Activated CD8-positive, alpha-beta memory T cell treated with anti-CD3 and anti-CD28 coated beads, Interleukin-2, amount 10 ng/mL, durations not matched to agents 7 days and 5 days (primary cell): ENCODE measurements at regions of chr11 and their contacts with region 1.

Region 1: DNA sequence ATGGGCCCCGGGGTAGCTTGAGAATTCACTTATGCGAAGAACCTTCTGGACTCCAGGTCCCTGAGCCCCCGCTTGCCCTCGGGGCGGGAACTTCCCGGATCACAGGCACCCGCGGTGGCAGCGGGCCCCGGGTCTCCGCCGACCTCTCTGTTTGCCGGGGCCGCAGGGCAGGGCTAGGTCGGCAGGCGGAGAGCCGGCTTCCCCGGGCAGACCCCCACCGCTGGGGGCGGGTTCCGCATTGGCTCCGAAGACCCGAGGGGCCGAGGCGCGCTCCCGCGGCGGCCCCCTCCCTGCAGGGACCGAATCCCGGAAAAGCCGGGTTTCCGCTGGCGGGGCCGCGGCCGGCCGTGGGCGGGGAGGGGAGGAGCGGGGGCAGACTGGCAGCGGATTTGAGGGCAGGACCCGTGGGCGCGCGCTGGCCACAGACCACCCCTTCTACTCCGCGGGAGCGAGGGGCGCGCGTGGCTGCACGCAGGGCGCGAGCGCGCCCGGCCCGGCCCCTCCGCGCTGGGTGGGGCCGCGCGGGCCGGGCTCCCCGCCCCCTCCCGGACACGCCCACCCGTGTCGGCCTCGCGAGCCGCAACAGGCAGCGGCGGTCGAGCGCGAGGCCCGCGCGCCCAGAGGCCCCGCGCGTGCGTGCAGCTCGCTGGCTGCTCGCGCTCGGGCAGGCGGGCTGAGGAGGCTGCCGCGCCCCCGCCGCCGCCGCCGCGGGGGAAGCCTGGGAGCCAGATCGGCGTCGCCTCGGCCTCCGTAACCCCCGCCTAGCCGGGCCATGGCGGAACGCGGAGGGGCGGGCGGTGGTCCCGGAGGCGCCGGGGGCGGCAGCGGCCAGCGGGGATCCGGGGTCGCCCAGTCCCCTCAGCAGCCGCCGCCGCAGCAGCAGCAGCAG is at the start of gene PACS1:
- DNase-seq: peak; percentile 87
- ATAC-seq: peak; percentile 77
- H3K4me3 Mint-ChIP-seq: peak within 1 kb of the TSS; percentile 91
- H3K27ac Mint-ChIP-seq: peak within 1 kb of the TSS; percentile 88
- H3K4me1 Mint-ChIP-seq: peaks cover 54% of the 10 kb centered on the region
- H3K27me3 Mint-ChIP-seq: no peaks in the 10 kb centered on the region
- total RNA-seq, gene PACS1: 96.6 to 104 TPM

Region 2: GRCh38 chr11:66015454-66015881 is 54.5 kb before region 1 on chr11:
- CTCF ChIA-PET with region 1: no interaction called
- DNase-seq: no peak
- ATAC-seq: no peak
- H3K4me3 Mint-ChIP-seq: no peak overlapping the region
- H3K27ac Mint-ChIP-seq: no peak overlapping the region
- H3K4me1 Mint-ChIP-seq: peaks cover 6% of the 10 kb centered on the region
- H3K27me3 Mint-ChIP-seq: peaks cover 29% of the 10 kb centered on the region

Region 3: DNA sequence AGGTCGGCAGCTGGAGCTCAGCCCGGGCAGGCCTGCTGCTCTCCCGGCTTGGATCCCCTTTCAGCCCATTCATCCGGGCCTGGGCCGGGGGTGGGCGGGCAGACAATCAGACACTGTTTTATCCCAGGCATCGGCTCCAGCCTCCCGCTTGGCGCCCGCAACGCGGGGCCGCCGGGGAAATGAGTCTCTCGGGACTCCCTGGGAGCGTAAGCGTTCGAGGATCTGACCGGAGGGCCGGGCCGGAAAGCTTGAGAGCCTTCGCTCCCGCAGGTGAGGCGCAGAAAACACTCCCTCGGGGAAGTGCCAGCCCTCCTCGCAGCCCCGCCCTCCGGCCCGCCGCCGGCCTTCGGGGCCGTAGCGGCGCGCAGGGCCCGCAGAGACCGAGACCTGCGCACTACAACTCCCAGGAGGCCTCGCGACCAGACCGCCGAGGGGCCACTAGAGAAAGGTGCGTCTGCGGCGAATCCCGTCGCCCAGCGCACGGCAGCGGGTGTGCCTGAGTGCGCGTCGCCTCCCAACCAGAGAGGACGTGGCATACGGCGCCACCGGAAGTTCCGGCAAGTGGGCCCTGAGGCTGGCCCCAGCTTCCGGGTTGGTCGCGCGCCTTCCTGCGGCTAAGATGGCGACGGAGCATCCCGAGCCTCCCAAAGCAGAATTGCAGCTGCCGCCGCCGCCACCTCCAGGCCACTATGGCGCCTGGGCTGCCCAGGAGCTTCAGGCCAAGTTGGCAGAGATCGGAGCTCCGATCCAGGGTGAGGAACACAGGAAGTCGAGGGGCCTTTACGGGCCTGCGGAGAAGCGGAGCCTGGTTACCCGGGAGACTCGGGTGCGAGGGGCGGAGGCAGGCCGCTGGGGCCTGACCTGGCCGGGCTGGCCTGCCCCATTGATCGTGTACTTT is 17.9 kb before region 1 on chr11 and contains the start of gene SF3B2:
- CTCF ChIA-PET with region 1: interaction called, 93 read pairs
- DNase-seq: peak; percentile 99
- ATAC-seq: peak; percentile 98
- H3K4me3 Mint-ChIP-seq: peak within 1 kb of the TSS; percentile 89
- H3K27ac Mint-ChIP-seq: peak within 1 kb of the TSS; percentile 99
- H3K4me1 Mint-ChIP-seq: peaks cover 35% of the 10 kb centered on the region
- H3K27me3 Mint-ChIP-seq: no peaks in the 10 kb centered on the region
- total RNA-seq, gene SF3B2: 256 to 281 TPM

Region 4: DNA sequence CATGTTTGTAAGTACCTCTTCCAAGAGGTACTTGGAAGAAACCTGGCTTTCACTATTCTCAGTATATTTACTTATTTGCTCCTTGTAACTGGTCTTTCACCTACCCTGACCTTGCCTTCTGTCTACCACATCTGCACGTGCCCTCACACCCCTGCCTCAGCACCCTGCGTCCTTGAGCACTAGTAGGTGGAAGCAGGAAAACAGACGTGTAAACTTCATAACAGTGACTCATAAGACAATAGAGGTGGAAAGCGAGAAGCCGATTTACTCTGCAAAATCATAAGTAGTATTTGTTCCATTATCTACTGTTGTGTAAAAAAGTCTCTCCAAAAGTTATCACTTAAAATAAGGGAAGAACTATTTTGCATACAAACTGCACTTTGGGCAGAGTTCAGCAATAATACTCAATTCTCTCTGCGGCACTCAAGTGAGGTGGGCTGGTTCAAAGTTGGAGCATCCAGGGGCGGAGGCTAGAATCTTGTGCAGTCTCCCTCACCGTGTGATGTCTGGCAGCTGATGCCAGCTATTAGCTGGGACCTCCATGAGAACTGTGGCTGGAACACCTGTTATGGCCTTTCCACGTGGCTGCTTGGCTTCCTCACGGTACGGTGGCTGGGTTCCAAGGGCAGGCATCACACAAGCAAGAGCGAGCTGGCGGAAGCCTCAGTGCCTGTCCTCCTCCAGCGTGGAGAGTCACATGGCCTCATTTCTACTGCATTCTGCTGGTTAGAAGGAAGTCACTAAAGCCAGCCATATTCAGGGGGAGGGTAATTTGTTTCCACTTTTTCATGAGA is 30.5 kb after region 1 on chr11:
- CTCF ChIA-PET with region 1: interaction called, 11 read pairs
- DNase-seq: peak; percentile 85
- ATAC-seq: peak; percentile 96
- H3K4me3 Mint-ChIP-seq: peak overlapping the region; percentile 77
- H3K27ac Mint-ChIP-seq: peak overlapping the region; percentile 91
- H3K4me1 Mint-ChIP-seq: peaks cover 47% of the 10 kb centered on the region
- H3K27me3 Mint-ChIP-seq: no peaks in the 10 kb centered on the region

Region 5: DNA sequence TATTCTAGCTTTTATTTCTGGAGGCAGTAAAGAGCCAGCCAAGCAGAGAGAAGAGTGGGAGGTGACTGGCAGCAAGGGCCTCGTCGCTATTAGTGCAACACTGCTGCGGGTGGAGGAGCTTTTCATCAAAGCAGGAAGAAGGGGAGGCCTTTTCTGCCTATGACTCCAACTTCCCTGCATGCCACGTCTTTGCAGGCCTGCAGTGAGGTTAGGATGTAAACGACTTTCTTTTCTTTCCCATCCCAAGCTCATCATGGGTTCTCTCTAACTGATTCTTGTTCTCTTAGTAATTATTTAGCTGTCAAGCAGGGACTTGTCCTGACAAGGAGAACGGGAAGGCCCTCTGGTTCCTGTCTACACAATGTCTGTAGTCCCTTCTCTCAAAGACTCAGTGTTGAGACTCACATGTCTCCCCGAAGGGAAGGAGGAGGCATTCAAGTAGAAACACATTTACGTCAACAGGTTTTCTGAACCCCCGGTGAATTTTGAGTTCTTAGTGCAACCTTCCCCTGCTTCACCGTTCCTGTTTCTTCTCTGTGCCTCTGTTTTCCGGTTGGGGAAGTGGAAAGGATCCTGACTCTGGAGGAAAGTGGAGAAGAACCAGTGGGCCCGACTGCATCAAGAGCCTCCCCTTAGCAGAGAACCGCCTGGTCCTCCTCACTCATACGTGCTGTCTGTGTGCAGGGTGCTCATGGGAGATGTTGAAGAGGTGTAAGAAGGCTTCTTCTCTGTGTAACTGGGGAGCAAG is 57.0 kb after region 1 on chr11:
- CTCF ChIA-PET with region 1: interaction called, 28 read pairs
- DNase-seq: peak; percentile 75
- ATAC-seq: peak; percentile 87
- H3K4me3 Mint-ChIP-seq: peak overlapping the region; percentile 40
- H3K27ac Mint-ChIP-seq: peak overlapping the region; percentile 83
- H3K4me1 Mint-ChIP-seq: peaks cover 65% of the 10 kb centered on the region
- H3K27me3 Mint-ChIP-seq: no peaks in the 10 kb centered on the region